ENCODE measurements at regions of chr9 and their contacts with region 1.

Region 1: GRCh38 chr9:116616304-116616914 is 70.7 kb upstream of the TRIM32 start:
- DNase-seq: no peak
- H3K4me3 ChIP-seq: no peak overlapping the region
- H3K27ac ChIP-seq: no peak overlapping the region
- H3K4me1 ChIP-seq: no peaks in the 10 kb centered on the region
- H3K27me3 ChIP-seq: no peaks in the 10 kb centered on the region
- CTCF ChIP-seq: no peak

Region 2: DNA sequence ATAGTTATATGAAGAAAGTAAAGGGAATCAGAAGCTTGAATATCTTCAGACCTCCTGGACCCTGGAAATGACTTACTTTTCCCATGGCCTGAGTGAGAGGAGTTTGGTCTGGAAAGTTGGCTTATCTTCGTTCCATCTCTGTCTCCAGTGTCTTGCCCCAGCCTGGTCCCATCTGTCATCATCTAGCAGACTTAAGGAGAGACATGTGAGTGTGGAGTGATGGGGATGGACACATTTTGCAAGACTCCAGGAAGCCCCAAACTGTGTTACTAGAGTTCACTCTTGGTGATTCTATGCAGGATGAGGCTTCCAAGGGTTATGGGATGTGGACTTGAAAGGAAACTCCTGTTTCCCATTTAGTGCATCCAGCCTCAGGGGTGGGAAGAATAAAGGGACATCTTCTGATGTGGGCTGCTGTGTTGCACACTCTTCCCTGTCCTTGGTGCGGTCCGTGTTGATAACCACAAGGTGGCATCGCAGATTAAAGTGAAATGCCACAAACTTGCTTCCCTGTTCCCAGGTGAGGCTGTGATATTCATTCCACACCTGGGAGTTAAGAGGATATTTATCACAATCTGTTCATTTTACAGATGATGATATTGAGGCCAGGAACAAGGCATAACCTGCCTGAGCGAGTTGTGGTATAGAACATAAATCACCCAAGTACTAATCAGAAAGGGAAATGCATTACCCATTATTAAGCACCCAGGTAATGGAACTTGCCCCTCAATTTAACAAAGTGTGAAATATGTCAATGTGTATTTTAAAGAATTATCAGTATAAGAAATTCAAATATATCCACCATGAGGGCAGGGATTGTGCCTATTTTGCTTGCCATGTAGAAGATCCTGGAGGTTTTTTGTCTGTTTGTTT is 732.7 kb before region 1 on chr9:
- intact Hi-C with region 1: loop called (anchors 5 kb)
- DNase-seq: no peak
- H3K4me3 ChIP-seq: no peak overlapping the region
- H3K27ac ChIP-seq: no peak overlapping the region
- H3K4me1 ChIP-seq: peaks cover 0 to 3% (median 0%) of the 10 kb centered on the region in 4 donors
- H3K27me3 ChIP-seq: peaks cover 0 to 2% of the 10 kb centered on the region in 2 donors
- CTCF ChIP-seq: peak; percentile 39 to 49

Region 3: GRCh38 chr9:116269278-116269677 is 347.1 kb before region 1 on chr9:
- intact Hi-C with region 1: no loop called
- DNase-seq: no peak
- H3K4me3 ChIP-seq: no peak overlapping the region
- H3K27ac ChIP-seq: no peak overlapping the region
- H3K4me1 ChIP-seq: no peaks in the 10 kb centered on the region
- H3K27me3 ChIP-seq: no peaks in the 10 kb centered on the region
- CTCF ChIP-seq: no peak

Region 4: GRCh38 chr9:116541402-116541801 is 75.0 kb before region 1 on chr9:
- intact Hi-C with region 1: no loop called
- DNase-seq: no peak
- H3K4me3 ChIP-seq: no peak overlapping the region
- H3K27ac ChIP-seq: no peak overlapping the region
- H3K4me1 ChIP-seq: peaks cover 0 to 3% (median 0%) of the 10 kb centered on the region in 4 donors
- H3K27me3 ChIP-seq: no peaks in the 10 kb centered on the region
- CTCF ChIP-seq: no peak

Region 5: DNA sequence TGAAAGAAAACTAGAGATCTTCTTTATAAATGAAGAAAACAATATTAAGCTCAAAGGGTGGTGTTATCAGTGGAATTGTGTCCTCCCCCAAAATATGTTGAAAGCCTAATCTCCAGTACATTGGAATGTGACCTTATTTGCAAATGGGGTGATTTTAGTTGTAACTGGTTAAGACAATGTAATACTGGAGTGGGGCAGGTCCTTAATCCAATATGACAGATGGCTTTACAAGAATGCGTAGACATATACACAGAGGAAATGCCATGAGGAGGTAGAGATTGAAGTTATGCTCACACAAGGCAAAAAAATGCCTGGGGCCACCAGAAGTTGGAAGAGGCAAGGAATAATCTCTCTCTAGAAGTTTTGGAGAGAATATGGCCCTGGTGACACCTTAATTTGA is 57.0 kb after region 1 on chr9:
- intact Hi-C with region 1: no loop called
- DNase-seq: no peak
- H3K4me3 ChIP-seq: no peak overlapping the region
- H3K27ac ChIP-seq: no peak overlapping the region
- H3K4me1 ChIP-seq: no peaks in the 10 kb centered on the region
- H3K27me3 ChIP-seq: no peaks in the 10 kb centered on the region
- CTCF ChIP-seq: no peak

Region 6: GRCh38 chr9:116683535-116683934 is 67.1 kb after region 1 on chr9:
- intact Hi-C with region 1: no loop called
- DNase-seq: no peak
- H3K4me3 ChIP-seq: no peak overlapping the region
- H3K27ac ChIP-seq: no peak overlapping the region
- H3K4me1 ChIP-seq: peaks cover 0 to 15% (median 8%) of the 10 kb centered on the region in 4 donors
- H3K27me3 ChIP-seq: no peaks in the 10 kb centered on the region
- CTCF ChIP-seq: no peak

Measured in tibial artery (tissue), 4 donors.